ENCODE measurements at regions of chr6 and their contacts with region 1.

Region 1: DNA sequence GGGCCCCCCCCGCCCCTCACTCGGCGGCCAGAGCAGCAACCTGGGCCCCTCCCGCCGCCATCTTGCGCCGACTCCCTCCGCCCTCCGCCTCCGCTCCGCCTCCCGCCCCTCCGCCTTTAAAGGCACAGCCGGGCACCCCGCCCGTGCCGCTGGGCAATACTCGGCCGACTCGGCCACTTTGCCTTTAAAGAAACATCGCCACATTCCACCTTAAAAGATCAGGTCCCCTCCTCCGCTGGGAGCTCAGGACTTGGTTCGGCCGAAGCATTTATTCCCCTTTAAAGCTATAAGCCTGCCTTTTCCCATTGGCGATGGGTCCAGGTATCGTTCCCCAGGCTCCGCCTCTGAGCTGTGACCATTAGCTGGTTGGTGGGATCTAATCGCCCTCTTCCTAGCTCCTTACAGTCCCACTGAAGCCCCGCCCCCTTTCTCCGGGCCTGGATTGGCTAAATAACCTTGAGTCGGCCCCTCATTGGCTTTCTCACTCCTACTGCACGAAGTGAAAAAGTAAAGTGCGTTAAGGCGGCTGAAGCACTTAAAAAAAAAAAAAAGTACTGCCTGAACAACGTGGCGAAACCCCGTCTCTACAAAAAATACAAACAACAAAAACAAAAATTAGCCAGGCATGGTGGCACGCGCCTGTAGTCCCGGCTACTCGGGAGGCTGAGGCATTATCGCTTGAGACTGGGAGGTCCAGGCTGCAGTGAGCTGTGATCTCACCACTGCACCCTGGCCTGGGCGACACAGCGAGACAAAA is at the start of gene ZBTB22:
- DNase-seq: peak; percentile 100
- H3K4me3 ChIP-seq: peak within 1 kb of the TSS; percentile 55
- H3K27ac ChIP-seq: peak within 1 kb of the TSS; percentile 77
- H3K4me1 ChIP-seq: peaks cover 34% of the 10 kb centered on the region
- H3K27me3 ChIP-seq: no peaks in the 10 kb centered on the region
- CTCF ChIP-seq: no peak
- total RNA-seq, gene ZBTB22: 11.3 and 13.2 TPM in 2 replicates

Region 2: GRCh38 chr6:32113386-32114352 is 1204.2 kb before region 1 on chr6:
- CTCF ChIA-PET with region 1: no interaction called
- POLR2A ChIA-PET with region 1: no interaction called
- intact Hi-C with region 1: no loop called
- DNase-seq: no peak
- H3K4me3 ChIP-seq: no peak overlapping the region
- H3K27ac ChIP-seq: no peak overlapping the region
- H3K4me1 ChIP-seq: peaks cover 3% of the 10 kb centered on the region
- H3K27me3 ChIP-seq: peaks cover 5% of the 10 kb centered on the region
- CTCF ChIP-seq: no peak

Region 3: GRCh38 chr6:32967151-32968091 is 350.4 kb before region 1 on chr6:
- CTCF ChIA-PET with region 1: no interaction called
- POLR2A ChIA-PET with region 1: no interaction called
- intact Hi-C with region 1: no loop called
- DNase-seq: peak; percentile 65
- H3K4me3 ChIP-seq: peak overlapping the region; percentile 94
- H3K27ac ChIP-seq: peak overlapping the region; percentile 100
- H3K4me1 ChIP-seq: peaks cover 22% of the 10 kb centered on the region
- H3K27me3 ChIP-seq: no peaks in the 10 kb centered on the region
- CTCF ChIP-seq: peak; percentile 63

Region 4: DNA sequence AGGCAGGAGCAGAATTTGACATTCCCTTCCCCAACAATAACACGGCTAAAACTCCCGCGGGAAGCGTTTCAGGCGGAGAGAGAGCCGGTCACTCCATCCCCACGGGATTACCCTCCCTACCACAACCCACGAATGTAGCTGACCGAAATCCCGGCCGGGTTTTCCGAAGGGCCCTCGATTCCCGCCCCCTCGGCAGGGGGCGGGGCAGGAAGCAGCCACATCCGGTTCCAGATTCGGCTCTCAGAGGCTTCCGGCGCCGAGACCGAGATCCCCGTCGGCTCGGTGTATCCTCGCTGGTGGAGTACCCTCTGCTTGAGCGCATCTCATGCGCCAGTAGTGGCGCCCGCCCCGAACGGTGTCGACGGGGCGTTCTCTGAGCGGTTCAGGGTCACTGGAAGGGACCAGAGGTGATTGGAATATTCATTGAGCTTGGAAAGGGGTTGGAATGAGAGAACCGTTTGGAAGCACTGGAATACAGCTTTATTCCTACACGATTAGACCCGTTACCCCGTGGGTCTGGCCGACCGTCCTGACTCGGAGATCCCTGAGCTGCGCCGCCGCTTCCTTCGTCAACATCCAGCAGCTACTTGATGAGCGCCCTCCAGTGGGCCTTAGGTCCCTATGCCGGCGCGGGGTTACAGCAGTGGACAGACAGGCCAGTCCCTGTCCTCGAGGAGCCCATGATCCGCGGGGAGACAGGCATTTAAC is 18.5 kb before region 1 on chr6:
- CTCF ChIA-PET with region 1: interaction called, 22 read pairs
- POLR2A ChIA-PET with region 1: interaction called, 7 read pairs
- intact Hi-C with region 1: loop called (anchors 1 kb)
- DNase-seq: peak; percentile 98
- H3K4me3 ChIP-seq: peak overlapping the region; percentile 75
- H3K27ac ChIP-seq: peak overlapping the region; percentile 92
- H3K4me1 ChIP-seq: peaks cover 6% of the 10 kb centered on the region
- H3K27me3 ChIP-seq: no peaks in the 10 kb centered on the region
- CTCF ChIP-seq: peak; percentile 77

Region 5: GRCh38 chr6:33384581-33385020 is 66.8 kb after region 1 on chr6:
- CTCF ChIA-PET with region 1: interaction called, 16 read pairs
- POLR2A ChIA-PET with region 1: no interaction called
- intact Hi-C with region 1: no loop called
- DNase-seq: peak; percentile 56
- H3K4me3 ChIP-seq: no peak overlapping the region
- H3K27ac ChIP-seq: no peak overlapping the region
- H3K4me1 ChIP-seq: no peaks in the 10 kb centered on the region
- H3K27me3 ChIP-seq: no peaks in the 10 kb centered on the region
- CTCF ChIP-seq: peak; percentile 54

Region 6: GRCh38 chr6:33391278-33391921 is 73.6 kb after region 1 on chr6 and contains the start of gene KIFC1:
- CTCF ChIA-PET with region 1: no interaction called
- POLR2A ChIA-PET with region 1: no interaction called
- intact Hi-C with region 1: loop called (anchors 5 kb)
- DNase-seq: peak; percentile 100
- H3K4me3 ChIP-seq: peak within 1 kb of the TSS; percentile 98
- H3K27ac ChIP-seq: peak within 1 kb of the TSS; percentile 98
- H3K4me1 ChIP-seq: peaks cover 19% of the 10 kb centered on the region
- H3K27me3 ChIP-seq: no peaks in the 10 kb centered on the region
- CTCF ChIP-seq: peak; percentile 99
- total RNA-seq, gene KIFC1: 123 and 133 TPM in 2 replicates

Region 7: GRCh38 chr6:33417903-33418689 is 100.2 kb after region 1 on chr6 and contains the start of gene CUTA:
- CTCF ChIA-PET with region 1: no interaction called
- POLR2A ChIA-PET with region 1: no interaction called
- intact Hi-C with region 1: loop called (anchors 10 kb)
- DNase-seq: peak; percentile 100
- H3K4me3 ChIP-seq: peak within 1 kb of the TSS; percentile 61
- H3K27ac ChIP-seq: peak within 1 kb of the TSS; percentile 81
- H3K4me1 ChIP-seq: peaks cover 24% of the 10 kb centered on the region
- H3K27me3 ChIP-seq: no peaks in the 10 kb centered on the region
- CTCF ChIP-seq: peak; percentile 55
- total RNA-seq, gene CUTA: 221 and 223 TPM in 2 replicates